Spleen (tissue), 13 donors: ENCODE measurements at regions of chr7 and their contacts with region 1.

Region 1: GRCh38 chr7:106793015-106793975 is 71.8 kb upstream of the PIK3CG start:
- DNase-seq: no peak
- H3K4me3 ChIP-seq: no peak overlapping the region
- H3K27ac ChIP-seq: no peak overlapping the region
- H3K4me1 ChIP-seq: peaks cover 0 to 6% (median 0%) of the 10 kb centered on the region in 6 donors
- H3K27me3 ChIP-seq: no peaks in the 10 kb centered on the region
- CTCF ChIP-seq: peak; percentile 49 to 76 (median 69)
- POLR2A ChIP-seq: no peak

Region 2: DNA sequence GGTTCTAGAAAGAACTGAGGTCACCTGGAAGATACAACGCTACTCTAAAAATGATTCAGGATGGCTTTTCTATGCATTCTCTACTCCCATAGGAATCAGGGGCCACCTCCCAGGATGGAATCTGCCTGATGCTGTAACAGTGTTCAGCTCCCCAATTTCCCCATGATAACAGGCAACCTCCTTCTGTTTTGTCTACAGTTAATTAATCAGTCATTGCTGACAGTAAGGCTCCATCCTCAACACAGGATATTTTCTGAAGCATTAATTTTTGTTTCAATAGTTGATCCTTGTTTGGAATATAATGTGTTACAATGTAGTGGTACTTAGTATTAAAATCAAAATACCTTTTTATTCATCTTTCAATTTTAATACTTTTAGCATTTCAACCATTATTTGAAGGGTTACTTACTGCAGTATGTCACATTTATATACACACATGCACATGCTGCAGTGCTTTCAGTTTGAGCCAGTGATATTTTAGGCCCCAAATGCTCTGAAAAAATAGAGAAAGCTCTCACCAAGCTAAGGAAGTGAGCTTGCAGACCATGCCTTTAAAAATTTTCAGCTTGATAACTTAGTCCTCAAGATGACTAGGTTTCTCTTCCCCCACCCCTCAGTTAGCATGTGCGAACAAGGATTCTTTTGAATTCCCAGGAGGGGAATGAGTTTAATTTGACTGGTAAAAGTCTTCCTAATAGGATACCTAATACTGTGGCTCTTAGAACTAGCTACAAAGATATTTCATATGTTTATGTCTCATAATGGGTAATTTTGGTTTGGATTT is 71.2 kb after region 1 on chr7:
- intact Hi-C with region 1: loop called (anchors 5 kb)
- DNase-seq: no peak
- H3K4me3 ChIP-seq: peak overlapping the region in 7 of 8 donors; percentile 51 to 83 (median 61)
- H3K27ac ChIP-seq: peak overlapping the region; percentile 80 to 92 (median 88)
- H3K4me1 ChIP-seq: peaks cover 26 to 82% (median 52%) of the 10 kb centered on the region in 6 donors
- H3K27me3 ChIP-seq: no peaks in the 10 kb centered on the region
- CTCF ChIP-seq: no peak
- POLR2A ChIP-seq: no peak